Right cardiac atrium (tissue), 5 donors: ENCODE measurements at regions of chr9 and their contacts with region 1.

Region 1: GRCh38 chr9:83919111-83919510 is 2.1 kb downstream of the KIF27 start:
- DNase-seq: no peak
- ATAC-seq: no peak
- H3K4me3 ChIP-seq: no peak overlapping the region
- H3K27ac ChIP-seq: no peak overlapping the region
- H3K4me1 ChIP-seq: peaks cover 1% of the 10 kb centered on the region
- H3K27me3 ChIP-seq: no peaks in the 10 kb centered on the region

Region 2: DNA sequence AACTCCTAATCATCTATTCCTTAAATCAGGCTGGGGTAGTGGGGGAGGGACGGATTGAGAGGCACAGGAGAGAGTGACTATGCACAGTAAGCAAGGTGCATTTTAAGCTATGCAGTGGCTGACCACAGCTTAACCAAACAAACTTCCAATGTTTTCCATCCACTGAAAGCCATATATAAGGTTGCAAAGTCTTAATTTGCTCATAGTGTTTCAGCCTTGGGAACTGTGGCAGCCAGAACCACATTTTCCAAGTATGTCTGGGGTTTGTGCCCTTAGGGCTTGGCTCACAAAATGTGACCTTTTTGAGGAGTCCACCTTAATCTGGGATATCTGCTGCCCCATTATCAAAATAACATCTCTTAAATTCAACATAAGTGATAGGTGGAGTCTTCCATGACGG is 196.4 kb before region 1 on chr9:
- intact Hi-C with region 1: loop called in 1 of 4 experiments (anchors 5 kb)
- DNase-seq: no peak
- ATAC-seq: no peak
- H3K4me3 ChIP-seq: no peak overlapping the region
- H3K27ac ChIP-seq: no peak overlapping the region
- H3K4me1 ChIP-seq: no peaks in the 10 kb centered on the region
- H3K27me3 ChIP-seq: no peaks in the 10 kb centered on the region

Region 3: GRCh38 chr9:84404095-84404686 is 485.1 kb after region 1 on chr9:
- intact Hi-C with region 1: no loop called
- DNase-seq: no peak
- ATAC-seq: peak in 1 of 2 donors; percentile 26
- H3K4me3 ChIP-seq: no peak overlapping the region
- H3K27ac ChIP-seq: no peak overlapping the region
- H3K4me1 ChIP-seq: no peaks in the 10 kb centered on the region
- H3K27me3 ChIP-seq: no peaks in the 10 kb centered on the region

Region 4: DNA sequence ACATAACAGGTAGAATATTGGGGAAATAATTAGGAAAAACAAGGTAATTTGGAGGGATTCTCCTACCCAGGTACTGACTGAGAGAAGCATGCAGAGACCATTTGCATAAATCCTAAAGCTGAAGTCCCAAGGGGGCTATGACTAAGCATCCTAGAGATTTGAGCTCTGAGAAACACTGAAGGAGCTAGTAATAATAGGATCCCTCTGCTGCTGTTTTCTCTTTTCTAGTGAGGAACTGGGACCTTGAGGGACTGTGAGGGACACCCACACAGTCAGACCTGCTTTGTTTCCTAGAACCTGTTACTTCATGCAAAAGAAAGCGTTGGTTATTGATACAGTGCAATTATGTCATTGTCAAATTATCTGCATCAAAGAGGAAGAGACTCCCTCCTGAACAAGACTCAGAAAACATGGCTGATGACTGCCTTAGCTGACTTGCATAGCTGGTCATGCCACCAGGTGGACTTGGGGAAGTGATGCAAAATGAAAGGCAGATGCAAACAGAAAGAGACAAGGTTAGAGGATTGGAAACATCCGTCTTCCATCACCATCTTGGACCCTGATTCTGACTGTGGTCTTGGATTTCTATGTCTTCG is 1085.8 kb after region 1 on chr9:
- intact Hi-C with region 1: no loop called
- DNase-seq: no peak
- ATAC-seq: no peak
- H3K4me3 ChIP-seq: no peak overlapping the region
- H3K27ac ChIP-seq: no peak overlapping the region
- H3K4me1 ChIP-seq: no peaks in the 10 kb centered on the region
- H3K27me3 ChIP-seq: no peaks in the 10 kb centered on the region